Activated B cell treated with CpG ODN at 0.5 μM for 24 hours (primary cell): ENCODE measurements at regions of chr4 and their contacts with region 1.

Region 1: GRCh38 chr4:39365830-39366771 is at the start of gene RFC1:
- DNase-seq: peak; percentile 92
- ATAC-seq: peak; percentile 94
- H3K4me3 Mint-ChIP-seq: peak within 1 kb of the TSS; percentile 91
- H3K27ac Mint-ChIP-seq: peak within 1 kb of the TSS; percentile 88
- H3K4me1 Mint-ChIP-seq: peaks cover 39% of the 10 kb centered on the region
- H3K27me3 Mint-ChIP-seq: no peaks in the 10 kb centered on the region
- CTCF ChIP-seq: no peak
- total RNA-seq, gene RFC1: 44.8 and 45.9 TPM in 2 replicates

Region 2: GRCh38 chr4:39032218-39033085 is 333.6 kb before region 1 on chr4 and contains the start of gene TMEM156:
- CTCF ChIA-PET with region 1: no interaction called
- POLR2A ChIA-PET with region 1: no interaction called
- intact Hi-C with region 1: loop called (anchors 5 kb)
- DNase-seq: no peak
- ATAC-seq: peak; percentile 69
- H3K4me3 Mint-ChIP-seq: peak within 1 kb of the TSS; percentile 83
- H3K27ac Mint-ChIP-seq: peak within 1 kb of the TSS; percentile 93
- H3K4me1 Mint-ChIP-seq: peaks cover 64% of the 10 kb centered on the region
- H3K27me3 Mint-ChIP-seq: no peaks in the 10 kb centered on the region
- CTCF ChIP-seq: no peak
- total RNA-seq, gene TMEM156: 26.0 and 29.5 TPM in 2 replicates

Region 3: GRCh38 chr4:39331191-39331590 is 34.9 kb before region 1 on chr4:
- CTCF ChIA-PET with region 1: no interaction called
- POLR2A ChIA-PET with region 1: no interaction called
- intact Hi-C with region 1: no loop called
- DNase-seq: no peak
- ATAC-seq: no peak
- H3K4me3 Mint-ChIP-seq: no peak overlapping the region
- H3K27ac Mint-ChIP-seq: no peak overlapping the region
- H3K4me1 Mint-ChIP-seq: peaks cover 9% of the 10 kb centered on the region
- H3K27me3 Mint-ChIP-seq: no peaks in the 10 kb centered on the region
- CTCF ChIP-seq: no peak

Region 4: DNA sequence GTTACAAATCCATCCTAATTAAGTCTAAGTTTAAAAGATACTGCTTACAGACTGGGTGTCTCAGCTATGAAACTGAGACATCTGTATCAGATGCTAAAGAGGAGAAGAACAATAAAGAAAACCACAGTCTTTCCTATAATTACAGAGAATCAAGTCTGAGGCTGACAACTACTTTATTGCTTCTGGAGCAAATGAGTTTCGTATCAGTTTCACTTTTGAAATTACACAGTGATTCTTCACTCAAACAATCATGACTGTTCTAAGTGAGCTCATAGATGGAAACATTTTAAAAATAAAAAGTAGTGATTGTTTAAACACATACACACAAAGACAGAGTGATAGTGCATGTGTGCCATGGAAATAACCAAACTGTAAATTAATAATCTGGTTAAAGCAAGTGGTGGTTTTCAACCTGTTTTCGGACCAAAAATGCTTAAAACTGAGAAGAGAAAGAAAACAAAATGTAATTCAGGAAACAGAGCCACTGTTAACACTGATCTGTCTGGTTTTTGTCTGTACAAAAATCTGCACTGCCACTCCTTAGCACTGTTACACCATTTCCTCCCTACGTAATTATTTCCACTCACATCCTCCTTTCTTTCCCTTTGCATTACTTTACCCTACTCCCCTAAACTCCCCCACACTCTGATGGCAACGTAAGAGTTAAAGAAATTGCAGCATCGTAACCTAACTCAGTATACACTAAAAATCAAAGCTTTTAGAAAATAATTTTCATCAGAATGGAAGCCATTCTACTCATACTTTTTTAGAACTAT is 12.4 kb before region 1 on chr4:
- CTCF ChIA-PET with region 1: interaction called, 3 read pairs
- POLR2A ChIA-PET with region 1: interaction called, 94 read pairs
- intact Hi-C with region 1: loop called (anchors 1 kb)
- DNase-seq: no peak
- ATAC-seq: peak; percentile 66
- H3K4me3 Mint-ChIP-seq: peak overlapping the region; percentile 69
- H3K27ac Mint-ChIP-seq: peak overlapping the region; percentile 87
- H3K4me1 Mint-ChIP-seq: peaks cover 59% of the 10 kb centered on the region
- H3K27me3 Mint-ChIP-seq: no peaks in the 10 kb centered on the region
- CTCF ChIP-seq: no peak

Region 5: DNA sequence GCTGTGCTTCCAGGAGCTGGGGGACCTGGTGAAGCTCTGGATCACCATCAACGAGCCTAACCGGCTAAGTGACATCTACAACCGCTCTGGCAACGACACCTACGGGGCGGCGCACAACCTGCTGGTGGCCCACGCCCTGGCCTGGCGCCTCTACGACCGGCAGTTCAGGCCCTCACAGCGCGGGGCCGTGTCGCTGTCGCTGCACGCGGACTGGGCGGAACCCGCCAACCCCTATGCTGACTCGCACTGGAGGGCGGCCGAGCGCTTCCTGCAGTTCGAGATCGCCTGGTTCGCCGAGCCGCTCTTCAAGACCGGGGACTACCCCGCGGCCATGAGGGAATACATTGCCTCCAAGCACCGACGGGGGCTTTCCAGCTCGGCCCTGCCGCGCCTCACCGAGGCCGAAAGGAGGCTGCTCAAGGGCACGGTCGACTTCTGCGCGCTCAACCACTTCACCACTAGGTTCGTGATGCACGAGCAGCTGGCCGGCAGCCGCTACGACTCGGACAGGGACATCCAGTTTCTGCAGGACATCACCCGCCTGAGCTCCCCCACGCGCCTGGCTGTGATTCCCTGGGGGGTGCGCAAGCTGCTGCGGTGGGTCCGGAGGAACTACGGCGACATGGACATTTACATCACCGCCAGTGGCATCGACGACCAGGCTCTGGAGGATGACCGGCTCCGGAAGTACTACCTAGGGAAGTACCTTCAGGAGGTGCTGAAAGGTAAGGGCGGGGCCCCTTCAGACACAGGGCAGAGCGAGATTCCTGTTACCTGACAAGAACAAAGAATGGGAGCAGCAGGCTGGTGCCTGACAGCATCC is 80.9 kb after region 1 on chr4:
- CTCF ChIA-PET with region 1: interaction called, 3 read pairs
- POLR2A ChIA-PET with region 1: interaction called, 12 read pairs
- intact Hi-C with region 1: loop called (anchors 2 kb)
- DNase-seq: peak; percentile 80
- ATAC-seq: peak; percentile 94
- H3K4me3 Mint-ChIP-seq: peak overlapping the region; percentile 83
- H3K27ac Mint-ChIP-seq: peak overlapping the region; percentile 90
- H3K4me1 Mint-ChIP-seq: peaks cover 27% of the 10 kb centered on the region
- H3K27me3 Mint-ChIP-seq: no peaks in the 10 kb centered on the region
- CTCF ChIP-seq: no peak

Region 6: GRCh38 chr4:39458505-39459300 is 92.6 kb after region 1 on chr4 and contains the starts of genes LIAS and RPL9:
- CTCF ChIA-PET with region 1: no interaction called
- POLR2A ChIA-PET with region 1: interaction called, 23 read pairs
- intact Hi-C with region 1: no loop called
- DNase-seq: peak; percentile 90
- ATAC-seq: peak; percentile 81
- H3K4me3 Mint-ChIP-seq: peak within 1 kb of the TSS; percentile 97
- H3K27ac Mint-ChIP-seq: peak within 1 kb of the TSS; percentile 98
- H3K4me1 Mint-ChIP-seq: peaks cover 36% of the 10 kb centered on the region
- H3K27me3 Mint-ChIP-seq: no peaks in the 10 kb centered on the region
- CTCF ChIP-seq: no peak
- total RNA-seq, gene LIAS: 19.5 and 20.5 TPM in 2 replicates
- total RNA-seq, gene RPL9: 2,632 and 2,865 TPM in 2 replicates

Region 7: GRCh38 chr4:40056716-40057585 is 690.9 kb after region 1 on chr4 and contains the start of gene N4BP2:
- CTCF ChIA-PET with region 1: no interaction called
- POLR2A ChIA-PET with region 1: no interaction called
- intact Hi-C with region 1: no loop called
- DNase-seq: peak; percentile 75
- ATAC-seq: peak; percentile 68
- H3K4me3 Mint-ChIP-seq: peak within 1 kb of the TSS; percentile 95
- H3K27ac Mint-ChIP-seq: peak within 1 kb of the TSS; percentile 92
- H3K4me1 Mint-ChIP-seq: peaks cover 27% of the 10 kb centered on the region
- H3K27me3 Mint-ChIP-seq: no peaks in the 10 kb centered on the region
- CTCF ChIP-seq: no peak
- total RNA-seq, gene N4BP2: 6.0 and 6.2 TPM in 2 replicates